Sigmoid colon (tissue), 7 donors: ENCODE measurements at regions of chr3 and their contacts with region 1.

Region 1: DNA sequence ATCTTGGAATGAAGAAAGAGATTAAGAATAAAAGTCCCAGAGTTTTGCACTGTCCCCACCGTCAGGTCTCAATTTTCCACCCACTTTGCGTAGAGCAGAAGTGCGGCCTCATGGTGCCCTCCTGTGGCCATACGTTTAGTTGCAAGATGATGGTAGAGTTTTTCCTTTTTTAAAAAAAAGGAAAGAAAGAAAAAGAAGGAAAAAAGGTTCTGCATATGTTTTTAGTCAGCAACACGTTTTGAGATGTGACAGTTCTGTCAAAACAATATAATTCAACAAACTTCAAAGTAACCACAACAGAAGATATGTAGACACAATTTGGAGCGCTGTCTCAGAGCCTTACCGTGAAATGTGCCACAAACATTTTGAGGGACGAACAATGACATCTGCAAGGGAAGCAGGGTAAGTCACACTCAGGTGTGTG is 24.6 kb downstream of the EBLN2 start:
- DNase-seq: no peak
- H3K4me3 ChIP-seq: no peak overlapping the region
- H3K27ac ChIP-seq: no peak overlapping the region
- H3K4me1 ChIP-seq: peaks cover 0 to 3% (median 0%) of the 10 kb centered on the region in 4 donors
- H3K27me3 ChIP-seq: no peaks in the 10 kb centered on the region
- CTCF ChIP-seq: peak; percentile 63 to 83 (median 72)
- EP300 ChIP-seq: no peak
- POLR2A ChIP-seq: no peak

Region 2: GRCh38 chr3:71725279-71725991 is 1360.6 kb before region 1 on chr3 and contains the start of gene EIF4E3:
- intact Hi-C with region 1: loop called (anchors 10 kb)
- DNase-seq: peak; percentile 70
- H3K4me3 ChIP-seq: peak within 1 kb of the TSS; percentile 65 to 94 (median 72)
- H3K27ac ChIP-seq: peak within 1 kb of the TSS; percentile 74 to 83 (median 80)
- H3K4me1 ChIP-seq: peaks cover 2 to 30% (median 19%) of the 10 kb centered on the region in 4 donors
- H3K27me3 ChIP-seq: no peaks in the 10 kb centered on the region
- CTCF ChIP-seq: no peak
- EP300 ChIP-seq: no peak
- POLR2A ChIP-seq: no peak
- total RNA-seq, gene EIF4E3: 24.7 to 35.3 (median 31.8) TPM

Region 3: DNA sequence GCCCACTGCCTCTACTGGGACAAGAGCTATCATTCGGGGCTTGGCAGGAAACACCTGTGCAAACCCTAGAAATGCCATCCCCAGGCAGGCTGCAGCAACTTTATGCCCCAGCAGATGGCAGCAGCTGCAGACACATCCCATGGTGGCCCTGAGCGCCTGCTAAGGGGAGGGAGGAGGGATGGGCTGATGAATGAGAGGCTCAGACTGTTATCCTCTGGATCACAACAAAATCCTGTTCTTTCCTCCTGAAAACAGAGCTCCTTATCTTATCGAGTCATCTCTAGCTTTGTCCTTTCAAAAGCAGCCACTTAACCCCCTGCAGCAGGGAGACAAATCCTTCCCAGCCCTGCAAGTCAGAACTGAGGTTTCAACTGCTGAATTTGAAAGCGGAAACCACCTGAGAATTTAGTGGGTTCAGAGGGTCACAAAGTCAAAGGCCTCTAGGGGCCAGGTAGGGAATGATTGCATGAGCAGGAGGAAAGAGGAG is 1210.6 kb before region 1 on chr3:
- intact Hi-C with region 1: loop called (anchors 10 kb)
- DNase-seq: peak; percentile 85
- H3K4me3 ChIP-seq: no peak overlapping the region
- H3K27ac ChIP-seq: no peak overlapping the region
- H3K4me1 ChIP-seq: peaks cover 0 to 7% (median 3%) of the 10 kb centered on the region in 4 donors
- H3K27me3 ChIP-seq: no peaks in the 10 kb centered on the region
- CTCF ChIP-seq: peak; percentile 46 to 83 (median 74)
- EP300 ChIP-seq: no peak
- POLR2A ChIP-seq: no peak

Region 4: DNA sequence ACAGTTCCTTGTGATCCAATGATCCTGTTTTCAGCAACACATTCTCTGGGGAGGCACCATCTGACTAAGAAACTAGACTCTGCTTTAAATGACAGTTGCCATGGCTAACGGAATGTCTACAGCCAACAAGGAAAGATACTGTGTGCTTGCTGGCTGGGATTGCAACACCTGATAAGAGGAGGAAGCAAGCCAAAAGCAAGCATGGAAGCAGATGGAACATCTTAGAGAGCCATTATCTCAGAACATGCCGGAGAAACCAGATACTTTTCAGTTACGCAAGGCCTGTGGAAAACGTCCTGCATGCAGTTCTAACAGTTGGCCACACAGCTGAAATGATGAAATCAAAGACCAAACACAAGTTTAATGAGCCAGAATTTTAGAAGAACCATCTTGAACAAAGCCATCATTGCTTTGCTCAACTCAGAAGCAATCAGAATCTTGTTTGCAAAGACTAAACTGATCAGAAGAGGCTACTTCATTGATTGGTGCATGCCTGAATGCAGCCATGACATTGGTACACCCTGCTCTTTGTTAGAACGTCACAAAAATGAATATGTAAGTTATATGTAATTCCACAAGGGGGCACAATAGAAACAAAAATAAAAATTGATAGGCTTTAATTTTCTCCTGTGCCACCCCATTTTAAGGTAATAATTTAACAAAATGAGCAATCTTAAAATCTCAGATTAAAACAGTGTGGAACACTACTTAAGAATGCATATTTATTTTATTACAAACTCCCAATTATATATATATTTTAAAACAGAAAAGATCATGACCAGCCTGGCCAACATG is 147.4 kb before region 1 on chr3:
- intact Hi-C with region 1: loop called (anchors 2 kb)
- DNase-seq: peak; percentile 86
- H3K4me3 ChIP-seq: no peak overlapping the region
- H3K27ac ChIP-seq: peak overlapping the region; percentile 21 to 52 (median 44)
- H3K4me1 ChIP-seq: peaks cover 0 to 13% (median 4%) of the 10 kb centered on the region in 4 donors
- H3K27me3 ChIP-seq: no peaks in the 10 kb centered on the region
- CTCF ChIP-seq: peak; percentile 60 to 88 (median 87)
- EP300 ChIP-seq: no peak
- POLR2A ChIP-seq: no peak

Region 5: DNA sequence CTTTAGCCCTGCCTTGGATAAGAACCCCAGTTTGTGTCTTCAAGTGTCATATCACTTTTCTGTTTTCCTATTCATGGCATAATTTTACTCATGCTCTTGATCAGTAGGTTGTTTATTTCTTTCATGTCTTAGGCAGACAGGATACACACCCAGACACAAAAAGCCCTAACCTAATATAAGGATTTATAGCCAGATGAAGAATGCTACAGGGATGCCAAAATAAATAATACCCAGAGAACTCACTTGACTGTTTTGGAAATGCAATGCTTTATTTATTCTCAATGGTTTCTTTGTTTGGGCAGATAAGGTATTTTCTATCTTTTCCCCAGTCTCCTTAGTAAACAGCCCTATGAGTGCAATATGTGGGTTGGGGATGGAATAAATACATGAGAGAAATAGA is 962.6 kb after region 1 on chr3:
- intact Hi-C with region 1: no loop called
- DNase-seq: no peak
- H3K4me3 ChIP-seq: no peak overlapping the region
- H3K27ac ChIP-seq: no peak overlapping the region
- H3K4me1 ChIP-seq: no peaks in the 10 kb centered on the region
- H3K27me3 ChIP-seq: no peaks in the 10 kb centered on the region
- CTCF ChIP-seq: no peak
- EP300 ChIP-seq: no peak
- POLR2A ChIP-seq: no peak